Right ventricle myocardium superior (tissue), 1 donor: ENCODE measurements at regions of chr14 and their contacts with region 1.

Region 1: GRCh38 chr14:99744199-99744879 is 48.9 kb upstream of the EML1 start:
- DNase-seq: no peak
- ATAC-seq: no peak

Region 2: GRCh38 chr14:99786511-99786989 is 42.2 kb after region 1 on chr14:
- intact Hi-C with region 1: loop called (anchors 5 kb)
- DNase-seq: peak; percentile 63
- ATAC-seq: peak; percentile 91

Region 3: GRCh38 chr14:99862136-99862535 is 117.8 kb after region 1 on chr14:
- intact Hi-C with region 1: no loop called
- DNase-seq: no peak
- ATAC-seq: no peak

Region 4: GRCh38 chr14:100406505-100407131 is 662.3 kb after region 1 on chr14:
- intact Hi-C with region 1: no loop called
- DNase-seq: no peak
- ATAC-seq: peak; percentile 55